Pancreas (tissue), 10 donors: ENCODE measurements at regions of chr16 and their contacts with region 1.

Region 1: GRCh38 chr16:13919683-13920509 is at the start of gene ERCC4:
- DNase-seq: peak; percentile 99 to 100 (median 99)
- ATAC-seq: peak; percentile 94 to 98 (median 96)
- H3K4me3 ChIP-seq: peak within 1 kb of the TSS; percentile 49 to 82 (median 78)
- H3K27ac ChIP-seq: peak within 1 kb of the TSS; percentile 50 to 73 (median 56)
- H3K4me1 ChIP-seq: peaks cover 0 to 10% (median 0%) of the 10 kb centered on the region in 3 donors
- H3K27me3 ChIP-seq: no peaks in the 10 kb centered on the region
- CTCF ChIP-seq: peak; percentile 82 to 91 (median 89)
- total RNA-seq, gene ERCC4: 2.8 to 6.7 (median 5.2) TPM

Region 2: DNA sequence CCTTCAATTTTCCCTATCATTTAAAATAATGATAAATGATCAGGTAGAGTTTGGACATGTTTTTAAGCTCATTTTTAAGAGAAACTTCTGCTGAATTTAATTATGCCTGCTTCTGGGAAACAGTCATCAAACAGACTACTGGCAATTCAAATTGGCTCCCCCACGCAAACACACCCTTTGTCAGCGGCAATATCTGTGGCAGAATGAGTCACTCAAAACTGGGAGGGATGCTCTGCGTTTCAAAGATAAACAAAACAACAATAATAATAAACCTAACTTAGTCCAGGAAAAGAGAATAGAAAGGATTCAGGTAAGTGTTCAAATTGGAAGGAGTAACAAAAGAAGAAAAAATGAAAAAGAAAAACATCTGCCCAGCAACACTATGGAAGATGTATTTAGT is 108.1 kb before region 1 on chr16:
- intact Hi-C with region 1: no loop called
- DNase-seq: no peak
- ATAC-seq: no peak
- H3K4me3 ChIP-seq: no peak overlapping the region
- H3K27ac ChIP-seq: no peak overlapping the region
- H3K4me1 ChIP-seq: no peaks in the 10 kb centered on the region
- H3K27me3 ChIP-seq: peaks cover 0 to 5% (median 1%) of the 10 kb centered on the region in 4 donors
- CTCF ChIP-seq: no peak

Region 3: DNA sequence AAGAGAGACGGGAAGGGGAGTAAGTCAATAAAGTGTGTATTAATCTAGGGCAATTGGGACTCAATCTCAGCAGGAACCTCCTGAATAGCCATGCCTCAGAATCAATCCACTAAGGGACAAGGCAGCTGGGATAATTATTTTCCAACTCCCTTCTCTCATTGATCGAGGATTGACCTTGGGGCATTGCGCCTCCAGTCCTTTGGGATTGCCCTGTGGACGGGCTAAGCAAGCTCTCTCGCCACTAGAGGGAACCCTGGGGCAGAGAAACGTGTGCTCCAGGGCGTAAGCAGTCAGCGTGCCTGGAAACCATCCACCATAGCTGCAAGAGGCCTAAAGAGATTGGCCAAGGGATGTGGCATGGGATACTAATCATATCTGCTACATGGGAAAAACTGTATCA is 53.8 kb before region 1 on chr16:
- intact Hi-C with region 1: loop called in 1 of 3 experiments (anchors 5 kb)
- DNase-seq: peak; percentile 80 to 90 (median 86)
- ATAC-seq: peak; percentile 98 to 100 (median 100)
- H3K4me3 ChIP-seq: no peak overlapping the region
- H3K27ac ChIP-seq: no peak overlapping the region
- H3K4me1 ChIP-seq: no peaks in the 10 kb centered on the region
- H3K27me3 ChIP-seq: no peaks in the 10 kb centered on the region
- CTCF ChIP-seq: peak; percentile 68 to 84 (median 72)

Region 4: GRCh38 chr16:14003074-14003570 is 83.2 kb after region 1 on chr16:
- intact Hi-C with region 1: no loop called
- DNase-seq: peak in 1 of 6 donors; percentile 51
- ATAC-seq: peak in 3 of 4 donors; percentile 71 to 85 (median 85)
- H3K4me3 ChIP-seq: peak overlapping the region in 1 of 4 donors; percentile 22
- H3K27ac ChIP-seq: no peak overlapping the region
- H3K4me1 ChIP-seq: peaks cover 0 to under 1% (median 0%) of the 10 kb centered on the region in 3 donors
- H3K27me3 ChIP-seq: no peaks in the 10 kb centered on the region
- CTCF ChIP-seq: no peak

Region 5: GRCh38 chr16:14202697-14203096 is 282.8 kb after region 1 on chr16:
- intact Hi-C with region 1: loop called in 1 of 3 experiments (anchors 10 kb)
- DNase-seq: no peak
- ATAC-seq: peak; percentile 66 to 83 (median 81)
- H3K4me3 ChIP-seq: no peak overlapping the region
- H3K27ac ChIP-seq: peak overlapping the region in 1 of 4 donors; percentile 32
- H3K4me1 ChIP-seq: peaks cover 3 to 16% (median 4%) of the 10 kb centered on the region in 3 donors
- H3K27me3 ChIP-seq: no peaks in the 10 kb centered on the region
- CTCF ChIP-seq: peak in 3 of 4 donors; percentile 15 to 45 (median 36)

Region 6: GRCh38 chr16:14285513-14286385 is 365.9 kb after region 1 on chr16:
- intact Hi-C with region 1: loop called in 1 of 3 experiments (anchors 10 kb)
- DNase-seq: peak; percentile 86 to 100 (median 96)
- ATAC-seq: peak; percentile 89 to 94 (median 90)
- H3K4me3 ChIP-seq: peak overlapping the region; percentile 69 to 85 (median 75)
- H3K27ac ChIP-seq: peak overlapping the region; percentile 52 to 86 (median 74)
- H3K4me1 ChIP-seq: no peaks in the 10 kb centered on the region
- H3K27me3 ChIP-seq: no peaks in the 10 kb centered on the region
- CTCF ChIP-seq: no peak